ENCODE measurements at regions of chr21 and their contacts with region 1.

Region 1: GRCh38 chr21:41816220-41817165 is 49.6 kb upstream of the RIPK4 start:
- DNase-seq: peak; percentile 68 to 84 (median 82)
- ATAC-seq: peak; percentile 75 to 88
- H3K4me3 ChIP-seq: no peak overlapping the region
- H3K27ac ChIP-seq: no peak overlapping the region
- H3K4me1 ChIP-seq: no peaks in the 10 kb centered on the region
- H3K27me3 ChIP-seq: no peaks in the 10 kb centered on the region

Region 2: GRCh38 chr21:41570791-41571355 is 245.6 kb before region 1 on chr21:
- intact Hi-C with region 1: no loop called
- DNase-seq: no peak
- ATAC-seq: no peak
- H3K4me3 ChIP-seq: no peak overlapping the region
- H3K27ac ChIP-seq: no peak overlapping the region
- H3K4me1 ChIP-seq: no peaks in the 10 kb centered on the region
- H3K27me3 ChIP-seq: no peaks in the 10 kb centered on the region

Region 3: GRCh38 chr21:41879190-41879998 is 62.9 kb after region 1 on chr21 and contains the start of gene PRDM15:
- intact Hi-C with region 1: loop called in 1 of 4 experiments (anchors 10 kb)
- DNase-seq: peak; percentile 88 to 94 (median 94)
- ATAC-seq: peak; percentile 63 to 70
- H3K4me3 ChIP-seq: peak within 1 kb of the TSS; percentile 100
- H3K27ac ChIP-seq: peak within 1 kb of the TSS; percentile 80
- H3K4me1 ChIP-seq: no peaks in the 10 kb centered on the region
- H3K27me3 ChIP-seq: no peaks in the 10 kb centered on the region
- total RNA-seq, gene PRDM15: 3.1 to 6.0 (median 4.0) TPM

Region 4: GRCh38 chr21:41933313-41934086 is 117.0 kb after region 1 on chr21:
- intact Hi-C with region 1: loop called in 1 of 4 experiments (anchors 10 kb)
- DNase-seq: peak; percentile 51 to 72 (median 72)
- ATAC-seq: peak; percentile 62 to 65
- H3K4me3 ChIP-seq: peak overlapping the region; percentile 56
- H3K27ac ChIP-seq: peak overlapping the region; percentile 81
- H3K4me1 ChIP-seq: peaks cover 2% of the 10 kb centered on the region
- H3K27me3 ChIP-seq: no peaks in the 10 kb centered on the region

Measured in right cardiac atrium (tissue), 5 donors.